CD4-positive, alpha-beta T cell (primary cell): ENCODE measurements at regions of chr5 and their contacts with region 1.

Region 1: GRCh38 chr5:69093771-69094482 is at the start of gene SLC30A5:
- DNase-seq: peak; percentile 95 to 100 (median 97)
- ATAC-seq: peak; percentile 97
- H3K4me3 ChIP-seq: peak within 1 kb of the TSS; percentile 73
- H3K4me3 Mint-ChIP-seq: peak within 1 kb of the TSS; percentile 88
- H3K27ac ChIP-seq: peak within 1 kb of the TSS; percentile 77 to 90
- H3K27ac Mint-ChIP-seq: peak within 1 kb of the TSS; percentile 98
- H3K4me1 ChIP-seq: peaks cover 26% of the 10 kb centered on the region
- H3K4me1 Mint-ChIP-seq: peaks cover 45% of the 10 kb centered on the region
- H3K27me3 ChIP-seq: no peaks in the 10 kb centered on the region
- H3K27me3 Mint-ChIP-seq: no peaks in the 10 kb centered on the region
- CTCF ChIP-seq: peak; percentile 80
- total RNA-seq, gene SLC30A5: 16.9 to 17.2 TPM

Region 2: GRCh38 chr5:68872088-68872839 is 221.7 kb before region 1 on chr5:
- CTCF ChIA-PET with region 1: no interaction called
- POLR2A ChIA-PET with region 1: no interaction called
- intact Hi-C with region 1: no loop called
- DNase-seq: no peak
- ATAC-seq: no peak
- H3K4me3 ChIP-seq: no peak overlapping the region
- H3K4me3 Mint-ChIP-seq: no peak overlapping the region
- H3K27ac ChIP-seq: no peak overlapping the region
- H3K27ac Mint-ChIP-seq: no peak overlapping the region
- H3K4me1 ChIP-seq: peaks cover 8% of the 10 kb centered on the region
- H3K4me1 Mint-ChIP-seq: peaks cover 21% of the 10 kb centered on the region
- H3K27me3 ChIP-seq: no peaks in the 10 kb centered on the region
- H3K27me3 Mint-ChIP-seq: no peaks in the 10 kb centered on the region
- CTCF ChIP-seq: no peak

Region 3: DNA sequence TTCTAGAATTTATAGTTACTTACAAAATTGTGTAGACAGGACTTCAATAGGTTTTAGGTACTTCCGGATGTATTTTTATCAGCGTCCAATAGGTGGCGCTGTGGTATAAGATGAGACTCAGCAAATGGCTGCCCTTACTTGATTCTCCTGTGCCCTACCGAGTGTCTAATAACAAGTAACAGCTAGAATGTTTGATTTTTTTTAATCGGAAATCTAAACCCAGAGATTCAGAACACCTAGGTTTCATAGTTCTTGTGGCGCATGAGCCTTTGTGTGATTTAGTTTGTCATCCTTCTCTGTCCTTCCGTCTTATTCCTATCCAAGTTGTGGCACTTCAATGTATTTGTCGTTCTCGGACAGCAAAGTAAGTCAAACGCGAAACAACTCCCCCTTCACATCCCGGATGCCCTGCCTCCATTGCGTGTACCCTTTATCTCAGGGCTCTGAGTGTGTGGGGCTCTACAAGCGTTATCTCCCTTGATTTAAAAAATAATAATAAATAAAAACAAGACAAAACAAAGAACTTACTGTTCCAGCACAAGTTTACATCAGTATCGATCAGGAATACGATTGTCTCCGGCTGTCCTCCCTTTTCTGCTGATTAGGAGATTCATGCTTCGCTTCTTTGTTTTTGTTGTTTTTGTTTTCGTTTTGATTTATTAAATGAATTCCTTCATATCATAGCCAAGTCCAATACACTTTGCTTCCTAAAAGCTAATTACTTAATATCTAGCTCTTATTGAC is 50.8 kb before region 1 on chr5:
- CTCF ChIA-PET with region 1: interaction called, 29 read pairs
- POLR2A ChIA-PET with region 1: interaction called, 9 read pairs
- intact Hi-C with region 1: loop called (anchors 2 kb)
- DNase-seq: peak; percentile 49 to 95 (median 76)
- ATAC-seq: peak; percentile 96
- H3K4me3 ChIP-seq: peak overlapping the region; percentile 54
- H3K4me3 Mint-ChIP-seq: peak overlapping the region; percentile 83
- H3K27ac ChIP-seq: peak overlapping the region; percentile 15 to 43
- H3K27ac Mint-ChIP-seq: peak overlapping the region; percentile 82
- H3K4me1 ChIP-seq: no peaks in the 10 kb centered on the region
- H3K4me1 Mint-ChIP-seq: no peaks in the 10 kb centered on the region
- H3K27me3 ChIP-seq: no peaks in the 10 kb centered on the region
- H3K27me3 Mint-ChIP-seq: no peaks in the 10 kb centered on the region
- CTCF ChIP-seq: peak; percentile 82

Region 4: GRCh38 chr5:69083412-69083811 is 10.5 kb before region 1 on chr5:
- CTCF ChIA-PET with region 1: interaction called, 26 read pairs
- POLR2A ChIA-PET with region 1: interaction called, 3 read pairs
- intact Hi-C with region 1: no loop called
- DNase-seq: no peak
- ATAC-seq: no peak
- H3K4me3 ChIP-seq: no peak overlapping the region
- H3K4me3 Mint-ChIP-seq: no peak overlapping the region
- H3K27ac ChIP-seq: no peak overlapping the region
- H3K27ac Mint-ChIP-seq: no peak overlapping the region
- H3K4me1 ChIP-seq: peaks cover 3% of the 10 kb centered on the region
- H3K4me1 Mint-ChIP-seq: no peaks in the 10 kb centered on the region
- H3K27me3 ChIP-seq: no peaks in the 10 kb centered on the region
- H3K27me3 Mint-ChIP-seq: no peaks in the 10 kb centered on the region
- CTCF ChIP-seq: no peak

Region 5: GRCh38 chr5:69166686-69167492 is 73.0 kb after region 1 on chr5 and contains the start of gene CCNB1:
- CTCF ChIA-PET with region 1: interaction called, 20 read pairs
- POLR2A ChIA-PET with region 1: interaction called, 5 read pairs
- intact Hi-C with region 1: loop called (anchors 2 to 5 kb)
- DNase-seq: peak; percentile 92 to 98 (median 96)
- ATAC-seq: peak; percentile 100
- H3K4me3 ChIP-seq: peak within 1 kb of the TSS; percentile 80
- H3K4me3 Mint-ChIP-seq: peak within 1 kb of the TSS; percentile 93
- H3K27ac ChIP-seq: peak within 1 kb of the TSS in 1 of 2 donors; percentile 46
- H3K27ac Mint-ChIP-seq: peak within 1 kb of the TSS; percentile 73
- H3K4me1 ChIP-seq: peaks cover 16% of the 10 kb centered on the region
- H3K4me1 Mint-ChIP-seq: peaks cover 23% of the 10 kb centered on the region
- H3K27me3 ChIP-seq: no peaks in the 10 kb centered on the region
- H3K27me3 Mint-ChIP-seq: no peaks in the 10 kb centered on the region
- CTCF ChIP-seq: no peak
- total RNA-seq, gene CCNB1: 1.4 to 1.5 TPM

Region 6: GRCh38 chr5:69189162-69190086 is 95.5 kb after region 1 on chr5 and contains the start of gene CENPH:
- CTCF ChIA-PET with region 1: interaction called, 19 read pairs
- POLR2A ChIA-PET with region 1: interaction called, 8 read pairs
- intact Hi-C with region 1: no loop called
- DNase-seq: peak; percentile 80 to 94 (median 88)
- ATAC-seq: peak; percentile 92
- H3K4me3 ChIP-seq: peak within 1 kb of the TSS; percentile 80
- H3K4me3 Mint-ChIP-seq: peak within 1 kb of the TSS; percentile 92
- H3K27ac ChIP-seq: peak within 1 kb of the TSS; percentile 64 to 68
- H3K27ac Mint-ChIP-seq: peak within 1 kb of the TSS; percentile 83
- H3K4me1 ChIP-seq: peaks cover 17% of the 10 kb centered on the region
- H3K4me1 Mint-ChIP-seq: peaks cover 17% of the 10 kb centered on the region
- H3K27me3 ChIP-seq: no peaks in the 10 kb centered on the region
- H3K27me3 Mint-ChIP-seq: no peaks in the 10 kb centered on the region
- CTCF ChIP-seq: no peak
- total RNA-seq, gene CENPH: 4.0 to 5.6 TPM

Region 7: GRCh38 chr5:69234457-69235268 is 140.7 kb after region 1 on chr5 and contains the start of gene CDK7:
- CTCF ChIA-PET with region 1: interaction called, 10 read pairs
- POLR2A ChIA-PET with region 1: interaction called, 15 read pairs
- intact Hi-C with region 1: loop called (anchors 5 kb)
- DNase-seq: peak; percentile 80 to 96 (median 89)
- ATAC-seq: peak; percentile 99
- H3K4me3 ChIP-seq: peak within 1 kb of the TSS; percentile 90
- H3K4me3 Mint-ChIP-seq: peak within 1 kb of the TSS; percentile 95
- H3K27ac ChIP-seq: peak within 1 kb of the TSS; percentile 74 to 75
- H3K27ac Mint-ChIP-seq: peak within 1 kb of the TSS; percentile 86
- H3K4me1 ChIP-seq: peaks cover 23% of the 10 kb centered on the region
- H3K4me1 Mint-ChIP-seq: peaks cover 40% of the 10 kb centered on the region
- H3K27me3 ChIP-seq: no peaks in the 10 kb centered on the region
- H3K27me3 Mint-ChIP-seq: no peaks in the 10 kb centered on the region
- CTCF ChIP-seq: no peak
- total RNA-seq, gene CDK7: 30.1 to 33.0 TPM

Region 8: GRCh38 chr5:69369369-69370121 is 275.6 kb after region 1 on chr5 and contains the starts of genes AK6, RAD17 and TAF9:
- CTCF ChIA-PET with region 1: interaction called, 10 read pairs
- POLR2A ChIA-PET with region 1: interaction called, 10 read pairs
- intact Hi-C with region 1: loop called (anchors 1 kb)
- DNase-seq: peak; percentile 83 to 95 (median 88)
- ATAC-seq: peak; percentile 86
- H3K4me3 ChIP-seq: peak within 1 kb of the TSS; percentile 90
- H3K4me3 Mint-ChIP-seq: peak within 1 kb of the TSS; percentile 99
- H3K27ac ChIP-seq: peak within 1 kb of the TSS; percentile 94 to 98
- H3K27ac Mint-ChIP-seq: peak within 1 kb of the TSS; percentile 98
- H3K4me1 ChIP-seq: peaks cover 20% of the 10 kb centered on the region
- H3K4me1 Mint-ChIP-seq: peaks cover 55% of the 10 kb centered on the region
- H3K27me3 ChIP-seq: no peaks in the 10 kb centered on the region
- H3K27me3 Mint-ChIP-seq: no peaks in the 10 kb centered on the region
- CTCF ChIP-seq: no peak
- total RNA-seq, gene AK6: 8.2 to 10.6 TPM
- total RNA-seq, gene RAD17: 15.7 to 19.1 TPM
- total RNA-seq, gene TAF9: 53.8 to 54.2 TPM